Posterior cingulate gyrus (tissue), 11 donors: ENCODE measurements at regions of chr1 and their contacts with region 1.

Region 1: GRCh38 chr1:199937661-199938060 is 89.8 kb upstream of the NR5A2 start:
- DNase-seq: no peak

Region 2: DNA sequence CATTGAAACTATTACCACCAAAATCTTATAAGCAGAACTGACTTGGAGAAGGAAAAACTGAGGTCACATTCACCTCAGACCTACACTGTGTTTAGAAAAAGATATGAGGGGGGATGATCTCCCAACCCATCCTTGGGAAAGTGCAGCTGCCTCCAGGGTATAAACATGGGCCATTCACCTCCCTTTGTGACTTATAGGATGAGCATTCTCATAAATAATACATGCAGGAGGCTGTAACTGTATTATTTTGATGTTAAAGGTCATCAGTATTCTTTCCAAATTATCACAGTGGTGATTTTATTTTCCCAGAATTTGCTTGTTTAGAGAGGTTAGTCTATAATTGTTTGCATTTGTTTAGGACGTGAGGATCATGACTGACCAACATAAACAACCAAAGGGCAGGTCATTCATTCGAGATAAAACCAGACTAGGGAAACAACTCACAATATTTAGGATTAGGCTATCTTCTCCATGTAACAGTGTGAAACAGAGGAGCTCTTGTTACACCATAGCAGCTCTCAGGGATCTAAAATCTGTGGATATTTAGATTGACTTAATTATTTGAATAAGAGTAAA is 19.4 kb before region 1 on chr1:
- intact Hi-C with region 1: loop called (anchors 2 kb)
- DNase-seq: no peak